HepG2 (cell line): ENCODE measurements at regions of chr12 and their contacts with region 1.

Region 1: DNA sequence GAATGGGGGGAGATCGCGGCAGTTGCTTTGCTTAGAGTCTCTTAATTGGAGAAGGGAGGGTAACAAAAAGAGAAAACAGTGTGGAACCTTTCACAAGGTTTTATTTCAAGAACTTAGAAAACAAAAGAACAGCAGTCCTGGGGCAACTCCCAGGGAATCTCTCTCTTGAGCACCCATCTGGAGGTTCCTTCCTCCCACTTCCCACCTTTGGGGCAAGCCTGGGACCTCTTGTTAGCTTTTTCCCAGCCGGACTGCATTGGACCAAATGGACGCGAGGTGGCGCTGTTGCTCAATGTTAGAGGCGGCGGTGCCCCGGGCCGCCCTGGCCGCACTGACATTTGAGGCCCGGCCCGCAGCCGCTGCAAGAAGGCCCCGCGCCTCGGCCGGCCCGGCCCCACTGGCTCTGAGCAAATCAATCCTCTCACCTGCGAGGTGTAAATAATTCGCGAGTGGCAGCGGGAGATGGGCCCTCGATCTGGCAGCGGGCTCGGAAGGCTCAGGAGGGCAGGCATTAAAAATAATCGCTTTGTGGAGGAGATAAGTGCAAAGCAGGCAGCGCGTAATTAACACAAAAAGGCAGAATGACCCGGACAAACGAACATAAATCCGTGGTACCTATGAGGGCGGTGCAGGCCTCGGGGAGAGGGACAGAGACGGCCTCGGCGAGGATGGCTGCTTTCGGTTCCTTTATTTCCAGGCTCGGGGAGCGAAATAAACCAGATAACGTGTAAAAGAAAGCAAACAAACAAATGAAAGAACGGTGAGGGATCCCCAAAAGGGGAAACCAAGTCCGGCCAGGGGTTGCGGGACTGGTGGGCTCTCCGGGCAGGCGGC is 2.7 kb upstream of the HOXC8 start:
- DNase-seq: peak; percentile 73
- ATAC-seq: peak; percentile 84
- H3K4me3 ChIP-seq: peak overlapping the region in 1 of 3 experiments; percentile 48; a peak in 2 of 6 replicates
- H3K27ac ChIP-seq: no peak overlapping the region
- H3K4me1 ChIP-seq: peaks cover 24% of the 10 kb centered on the region
- H3K27me3 ChIP-seq: peaks cover 30 to 91% of the 10 kb centered on the region in 2 experiments
- CTCF ChIP-seq: peak; percentile 90
- EP300 ChIP-seq: no peak
- POLR2A ChIP-seq: no peak
- RAD21 ChIP-seq: peak; percentile 96

Region 2: DNA sequence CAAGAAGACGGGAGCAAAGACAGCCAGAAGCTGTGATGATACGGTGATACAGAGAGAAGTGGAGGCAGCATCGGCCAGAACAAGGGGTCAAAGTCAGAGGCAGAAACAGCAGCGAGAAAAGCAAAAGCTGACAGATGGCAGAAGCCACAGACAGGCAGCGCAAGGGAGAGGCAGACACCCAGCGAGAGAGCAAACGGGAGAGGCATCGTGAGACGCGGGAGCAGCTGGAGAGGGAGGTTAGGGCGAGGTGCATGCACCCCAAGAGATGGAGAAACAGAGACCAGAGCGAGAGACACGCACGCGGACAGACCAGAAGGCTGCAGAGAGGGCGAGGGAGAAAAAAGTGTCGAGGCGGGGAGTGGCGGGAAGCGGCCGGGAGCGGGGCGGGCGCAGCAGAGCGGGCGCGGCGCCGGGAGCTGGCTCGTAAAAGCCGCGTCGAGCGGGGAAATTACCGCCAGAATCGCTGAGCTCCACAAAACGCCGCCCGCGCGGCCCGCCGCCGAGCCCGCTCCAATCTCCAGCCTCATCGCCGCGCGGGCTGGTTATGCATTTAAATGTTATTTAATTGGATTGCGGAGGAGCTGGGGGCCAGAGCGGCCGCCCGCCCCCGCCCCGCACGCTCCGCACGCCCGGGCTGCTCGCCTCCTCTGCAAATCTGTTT is 167.1 kb after region 1 on chr12:
- CTCF ChIA-PET with region 1: no interaction called
- POLR2A ChIA-PET with region 1: no interaction called
- in situ Hi-C with region 1: no loop called
- intact Hi-C with region 1: no loop called
- DNase-seq: no peak
- ATAC-seq: peak; percentile 68
- H3K4me3 ChIP-seq: peak overlapping the region in 2 of 3 experiments; percentile 4 to 66; a peak in 2 of 6 replicates
- H3K27ac ChIP-seq: no peak overlapping the region
- H3K4me1 ChIP-seq: peaks cover 13% of the 10 kb centered on the region
- H3K27me3 ChIP-seq: peaks cover 1 to 35% of the 10 kb centered on the region in 2 experiments; a peak in 4 of 5 replicates
- CTCF ChIP-seq: no peak
- EP300 ChIP-seq: no peak
- POLR2A ChIP-seq: no peak
- RAD21 ChIP-seq: no peak

Region 3: GRCh38 chr12:54191550-54192022 is 185.5 kb after region 1 on chr12:
- CTCF ChIA-PET with region 1: interaction called, 15 read pairs
- POLR2A ChIA-PET with region 1: interaction called, 3 read pairs
- in situ Hi-C with region 1: no loop called
- intact Hi-C with region 1: loop called (anchors 1 kb)
- DNase-seq: peak; percentile 78
- ATAC-seq: peak; percentile 79
- H3K4me3 ChIP-seq: 0 out of 6 replicates have a peak overlapping the region, but pooled peaks of 1 of the 3 experiments have one; percentile 8
- H3K27ac ChIP-seq: no peak overlapping the region
- H3K4me1 ChIP-seq: peaks cover 38% of the 10 kb centered on the region
- H3K27me3 ChIP-seq: peaks cover 0 to 8% of the 10 kb centered on the region in 2 experiments; a peak in 1 of 5 replicates
- CTCF ChIP-seq: peak; percentile 89
- EP300 ChIP-seq: no peak
- POLR2A ChIP-seq: no peak
- RAD21 ChIP-seq: peak; percentile 72

Region 4: DNA sequence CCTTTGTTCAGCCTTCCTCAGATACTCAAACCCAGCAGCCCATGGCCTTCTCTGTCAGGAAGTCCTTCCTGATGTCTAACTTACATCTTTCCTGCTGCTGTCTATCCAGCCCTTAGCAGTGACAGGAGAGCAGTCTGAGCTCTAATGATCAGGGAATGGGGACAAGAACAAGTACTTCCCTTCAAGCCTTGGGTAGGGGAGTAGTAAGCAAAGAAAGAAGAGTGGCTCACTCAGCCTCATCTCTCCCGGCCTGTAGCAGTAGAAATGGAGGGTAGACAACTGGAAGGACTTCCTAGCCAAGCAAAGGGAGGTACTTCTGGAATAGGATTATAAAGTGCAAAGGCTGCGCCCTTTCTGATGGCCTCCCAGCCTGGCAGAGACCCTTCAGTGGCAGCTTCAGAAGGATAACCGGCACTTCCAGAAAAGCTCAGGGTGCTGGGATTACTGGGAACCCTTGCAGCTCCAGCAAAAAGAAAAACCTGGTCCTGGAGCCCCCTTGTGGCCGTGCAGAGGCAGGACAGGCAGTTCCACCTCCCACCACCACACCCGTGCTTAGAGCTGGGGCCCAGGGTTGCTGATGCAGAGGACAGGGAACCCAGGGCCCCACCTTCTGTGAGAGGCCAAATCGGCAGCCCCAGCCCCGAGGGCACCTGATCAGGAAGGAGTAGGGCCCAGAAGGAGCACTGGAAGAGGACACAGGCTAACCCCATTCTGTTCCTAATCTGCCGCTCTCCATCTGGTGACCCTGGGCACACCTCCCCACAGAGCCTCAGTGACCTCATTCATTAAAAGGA is 195.1 kb after region 1 on chr12:
- CTCF ChIA-PET with region 1: interaction called, 48 read pairs
- POLR2A ChIA-PET with region 1: no interaction called
- in situ Hi-C with region 1: no loop called
- intact Hi-C with region 1: loop called (anchors 1 kb)
- DNase-seq: peak; percentile 51
- ATAC-seq: peak; percentile 96
- H3K4me3 ChIP-seq: no peak overlapping the region
- H3K27ac ChIP-seq: no peak overlapping the region
- H3K4me1 ChIP-seq: no peaks in the 10 kb centered on the region
- H3K27me3 ChIP-seq: peaks cover 4 to 61% of the 10 kb centered on the region in 2 experiments; a peak in 4 of 5 replicates
- CTCF ChIP-seq: peak; percentile 85
- EP300 ChIP-seq: no peak
- POLR2A ChIP-seq: no peak
- RAD21 ChIP-seq: peak; percentile 87

Region 5: DNA sequence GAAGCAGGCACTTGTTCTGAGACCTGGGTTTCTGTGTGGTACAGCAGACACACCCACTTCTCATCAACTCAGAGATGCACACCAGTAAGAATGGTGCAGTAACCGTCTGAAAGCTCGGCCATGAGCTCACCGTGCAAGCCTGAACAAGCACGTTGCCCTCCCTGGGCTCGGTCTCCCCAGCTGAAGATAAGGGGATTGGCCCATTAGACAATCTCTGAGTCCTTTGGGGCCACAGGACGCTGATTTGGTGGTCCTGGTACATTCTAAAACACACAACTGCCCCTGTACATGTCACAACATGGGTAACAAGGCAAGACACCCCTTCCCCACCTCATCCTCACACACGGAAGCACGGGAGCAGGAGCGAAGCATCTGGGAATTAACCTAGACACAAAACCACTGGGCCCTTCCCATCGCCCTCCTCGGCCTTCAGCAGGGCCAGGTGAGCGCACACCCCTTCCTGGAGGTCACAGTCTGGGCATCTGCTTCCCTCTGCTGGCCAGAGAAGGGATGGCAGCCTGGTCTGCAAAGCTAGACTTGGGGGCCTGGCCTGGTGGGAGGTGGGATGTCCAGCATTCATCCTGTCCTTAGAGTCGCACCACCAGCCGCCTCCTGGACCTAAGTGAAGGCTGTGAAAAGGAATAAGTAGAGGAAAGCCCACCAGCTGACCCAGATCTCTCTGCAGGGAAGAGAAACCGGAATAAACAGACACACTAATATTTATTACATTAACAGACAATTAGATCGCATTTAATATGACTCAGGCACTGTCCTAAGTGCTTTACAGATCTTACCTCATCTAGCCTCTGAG is 201.6 kb after region 1 on chr12:
- CTCF ChIA-PET with region 1: interaction called, 26 read pairs
- POLR2A ChIA-PET with region 1: interaction called, 3 read pairs
- in situ Hi-C with region 1: no loop called
- intact Hi-C with region 1: loop called (anchors 2 kb)
- DNase-seq: peak; percentile 56
- ATAC-seq: peak; percentile 92
- H3K4me3 ChIP-seq: no peak overlapping the region
- H3K27ac ChIP-seq: no peak overlapping the region
- H3K4me1 ChIP-seq: no peaks in the 10 kb centered on the region
- H3K27me3 ChIP-seq: peaks cover 4 to 37% of the 10 kb centered on the region in 2 experiments; a peak in 4 of 5 replicates
- CTCF ChIP-seq: peak; percentile 95
- EP300 ChIP-seq: no peak
- POLR2A ChIP-seq: no peak
- RAD21 ChIP-seq: peak; percentile 75